T-cell (primary cell): ENCODE measurements at regions of chr1 and their contacts with region 1.

Region 1: GRCh38 chr1:117942293-117942692 is 12.8 kb downstream of the WDR3 start:
- DNase-seq: no peak
- ATAC-seq: no peak
- H3K4me3 ChIP-seq: no peak overlapping the region
- H3K4me3 Mint-ChIP-seq: no peak overlapping the region
- H3K27ac ChIP-seq: no peak overlapping the region
- H3K27ac Mint-ChIP-seq: no peak overlapping the region
- H3K4me1 ChIP-seq: no peaks in the 10 kb centered on the region
- H3K4me1 Mint-ChIP-seq: peaks cover 0 to 2% (median 0%) of the 10 kb centered on the region in 3 donors
- H3K27me3 ChIP-seq: no peaks in the 10 kb centered on the region
- H3K27me3 Mint-ChIP-seq: no peaks in the 10 kb centered on the region

Region 2: DNA sequence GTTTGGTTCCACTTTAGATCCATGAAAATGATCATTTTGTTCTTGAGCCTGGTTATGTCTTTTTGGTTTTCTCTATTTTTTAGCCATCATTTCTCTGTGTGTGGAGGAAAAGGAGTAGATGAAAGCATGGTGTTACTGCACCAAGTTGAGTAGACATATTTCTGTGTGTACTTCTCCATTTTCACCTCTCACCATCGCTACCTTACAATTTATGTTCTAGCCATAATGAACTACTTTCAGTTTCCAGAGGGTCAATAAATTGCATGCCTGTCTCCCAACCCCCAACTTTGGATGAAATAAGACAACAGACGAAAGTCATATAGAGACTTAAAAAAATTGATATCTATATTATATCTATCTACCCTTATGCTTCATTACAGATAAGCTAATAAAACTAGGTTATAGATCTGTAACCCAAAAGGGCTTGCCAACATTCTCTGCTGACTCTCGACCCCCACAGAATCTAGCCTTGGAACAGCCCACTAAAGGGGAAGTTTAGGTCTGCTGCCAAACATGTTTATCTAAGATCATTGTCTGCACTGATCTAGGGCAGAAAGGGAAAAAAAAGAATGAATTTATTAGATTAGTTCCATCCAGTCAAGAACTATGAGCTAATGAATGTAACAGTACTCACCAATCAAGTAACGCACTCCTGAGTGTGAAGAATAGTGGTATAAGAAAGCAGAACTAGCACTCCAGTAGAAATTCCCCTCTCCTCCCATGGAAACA is 582.6 kb before region 1 on chr1:
- CTCF ChIA-PET with region 1: no interaction called
- POLR2A ChIA-PET with region 1: interaction called in 1 of 2 experiments, 13 read pairs
- DNase-seq: no peak
- ATAC-seq: no peak
- H3K4me3 ChIP-seq: no peak overlapping the region
- H3K4me3 Mint-ChIP-seq: peak overlapping the region; percentile 21 to 69 (median 25)
- H3K27ac ChIP-seq: no peak overlapping the region
- H3K27ac Mint-ChIP-seq: peak overlapping the region; percentile 60 to 82
- H3K4me1 ChIP-seq: peaks cover 6 to 29% of the 10 kb centered on the region in 2 experiments
- H3K4me1 Mint-ChIP-seq: peaks cover 54 to 67% (median 66%) of the 10 kb centered on the region in 3 donors
- H3K27me3 ChIP-seq: no peaks in the 10 kb centered on the region
- H3K27me3 Mint-ChIP-seq: no peaks in the 10 kb centered on the region

Region 3: DNA sequence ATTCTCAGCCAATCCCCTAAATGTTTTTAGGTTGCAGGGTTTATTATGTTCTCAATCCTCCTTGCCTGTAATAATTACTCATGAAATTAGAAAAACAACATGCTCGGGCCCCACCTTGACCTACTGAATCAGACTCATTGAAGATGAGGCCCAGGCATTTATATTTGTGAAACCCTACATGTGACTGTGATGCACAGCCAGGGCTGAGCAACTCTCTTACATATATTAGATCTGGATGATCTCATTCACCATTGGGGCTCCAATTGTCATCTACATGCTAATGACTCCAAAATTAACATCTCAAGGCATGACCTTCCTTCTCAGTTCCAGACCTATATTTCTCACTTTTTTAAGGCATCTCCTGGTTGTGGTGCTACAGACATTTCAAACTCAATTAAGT is 90.6 kb after region 1 on chr1:
- CTCF ChIA-PET with region 1: no interaction called
- POLR2A ChIA-PET with region 1: no interaction called
- DNase-seq: no peak
- ATAC-seq: no peak
- H3K4me3 ChIP-seq: no peak overlapping the region
- H3K4me3 Mint-ChIP-seq: no peak overlapping the region
- H3K27ac ChIP-seq: no peak overlapping the region
- H3K27ac Mint-ChIP-seq: no peak overlapping the region
- H3K4me1 ChIP-seq: no peaks in the 10 kb centered on the region
- H3K4me1 Mint-ChIP-seq: no peaks in the 10 kb centered on the region
- H3K27me3 ChIP-seq: no peaks in the 10 kb centered on the region
- H3K27me3 Mint-ChIP-seq: peaks cover 14 to 15% of the 10 kb centered on the region in 2 donors